Esophagus squamous epithelium (tissue), 5 donors: ENCODE measurements at regions of chr6 and their contacts with region 1.

Region 1: GRCh38 chr6:36759148-36759759 is 61.6 kb downstream of the RAB44 start:
- DNase-seq: no peak
- H3K4me3 ChIP-seq: no peak overlapping the region
- H3K27ac ChIP-seq: peak overlapping the region in 3 of 4 donors; percentile 6 to 91 (median 33)
- H3K4me1 ChIP-seq: peaks cover 25 to 50% (median 35%) of the 10 kb centered on the region in 3 donors
- H3K27me3 ChIP-seq: no peaks in the 10 kb centered on the region
- CTCF ChIP-seq: peak; percentile 95 to 99 (median 98)
- POLR2A ChIP-seq: no peak

Region 2: DNA sequence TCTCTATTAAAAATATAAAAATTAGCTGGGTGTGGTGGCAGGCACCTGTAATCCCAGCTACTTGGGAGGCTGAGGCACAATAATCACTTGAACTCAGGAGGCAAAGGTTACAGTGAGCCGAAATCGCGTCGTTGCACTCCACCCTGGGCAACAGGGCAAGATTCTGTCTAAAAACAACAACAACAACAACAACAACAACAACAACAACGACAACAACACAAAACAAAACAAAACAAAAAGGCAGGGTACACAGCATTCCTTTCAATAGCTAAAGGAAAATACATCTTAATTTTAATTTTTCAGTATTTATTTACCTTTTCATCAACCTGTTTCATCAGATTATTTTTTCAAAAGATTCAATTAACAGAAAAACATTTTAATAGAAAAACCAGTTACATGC is 866.8 kb before region 1 on chr6:
- intact Hi-C with region 1: no loop called
- DNase-seq: no peak
- H3K4me3 ChIP-seq: no peak overlapping the region
- H3K27ac ChIP-seq: no peak overlapping the region
- H3K4me1 ChIP-seq: no peaks in the 10 kb centered on the region
- H3K27me3 ChIP-seq: no peaks in the 10 kb centered on the region
- CTCF ChIP-seq: no peak
- POLR2A ChIP-seq: no peak

Region 3: GRCh38 chr6:36615018-36615761 is 144.1 kb before region 1 on chr6:
- intact Hi-C with region 1: loop called (anchors 10 kb)
- DNase-seq: no peak
- H3K4me3 ChIP-seq: no peak overlapping the region
- H3K27ac ChIP-seq: peak overlapping the region in 2 of 4 donors; percentile 17 to 22
- H3K4me1 ChIP-seq: peaks cover 11 to 39% (median 11%) of the 10 kb centered on the region in 3 donors
- H3K27me3 ChIP-seq: no peaks in the 10 kb centered on the region
- CTCF ChIP-seq: peak; percentile 53 to 77 (median 69)
- POLR2A ChIP-seq: no peak